Natural killer cell (primary cell): ENCODE measurements at regions of chr5 and their contacts with region 1.

Region 1: GRCh38 chr5:173887610-173888472 is at the start of gene CPEB4:
- DNase-seq: peak; percentile 94 to 100
- ATAC-seq: peak; percentile 94 to 98 (median 94)
- H3K4me3 ChIP-seq: peak within 1 kb of the TSS; percentile 95
- H3K4me3 Mint-ChIP-seq: peak within 1 kb of the TSS; percentile 99
- H3K27ac ChIP-seq: peak within 1 kb of the TSS; percentile 83
- H3K27ac Mint-ChIP-seq: peak within 1 kb of the TSS; percentile 99
- H3K4me1 ChIP-seq: peaks cover 42% of the 10 kb centered on the region
- H3K4me1 Mint-ChIP-seq: peaks cover 79 to 83% of the 10 kb centered on the region in 2 donors
- H3K27me3 ChIP-seq: no peaks in the 10 kb centered on the region
- H3K27me3 Mint-ChIP-seq: no peaks in the 10 kb centered on the region
- CTCF ChIP-seq: no peak
- total RNA-seq, gene CPEB4: 44.4 to 60.4 (median 55.1) TPM

Region 2: GRCh38 chr5:173917788-173918786 is 30.2 kb after region 1 on chr5:
- intact Hi-C with region 1: loop called (anchors 1 kb)
- DNase-seq: peak; percentile 32 to 86
- ATAC-seq: peak; percentile 87 to 93 (median 90)
- H3K4me3 ChIP-seq: peak overlapping the region; percentile 36
- H3K4me3 Mint-ChIP-seq: no peak overlapping the region
- H3K27ac ChIP-seq: peak overlapping the region; percentile 79
- H3K27ac Mint-ChIP-seq: no peak overlapping the region
- H3K4me1 ChIP-seq: peaks cover 4% of the 10 kb centered on the region
- H3K4me1 Mint-ChIP-seq: no peaks in the 10 kb centered on the region
- H3K27me3 ChIP-seq: no peaks in the 10 kb centered on the region
- H3K27me3 Mint-ChIP-seq: no peaks in the 10 kb centered on the region
- CTCF ChIP-seq: no peak